Panc1 (cell line): ENCODE measurements at regions of chr17 and their contacts with region 1.

Region 1: DNA sequence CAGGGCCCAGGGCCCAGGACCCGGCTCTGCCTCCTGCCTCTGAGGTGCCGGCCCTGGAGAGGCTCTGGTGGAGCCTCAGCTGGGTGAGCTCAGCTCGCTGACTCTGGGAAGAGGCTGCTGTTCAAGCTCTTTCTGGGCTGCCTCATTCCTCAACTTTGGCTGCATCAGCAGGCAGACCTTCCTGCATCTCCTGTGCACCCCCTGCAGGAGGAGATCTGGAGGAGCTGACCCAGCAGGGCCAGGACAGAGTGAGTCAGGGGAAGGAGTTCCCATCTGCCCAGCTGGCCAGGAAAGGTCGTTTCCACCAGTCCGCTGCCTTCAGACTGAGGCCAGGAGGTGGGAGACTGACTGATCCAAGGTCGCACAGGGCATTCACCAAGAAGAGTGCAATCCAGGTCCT is 10.7 kb downstream of the CRHR1 start:
- DNase-seq: no peak
- ATAC-seq: peak; percentile 46; the same call in 1 of the 2 replicates
- H3K4me3 ChIP-seq: no peak overlapping the region
- H3K27ac ChIP-seq: no peak overlapping the region
- H3K4me1 ChIP-seq: no peaks in the 10 kb centered on the region
- H3K27me3 ChIP-seq: no peaks in the 10 kb centered on the region; the same call in 1 of the 2 replicates
- CTCF ChIP-seq: no peak

Region 2: DNA sequence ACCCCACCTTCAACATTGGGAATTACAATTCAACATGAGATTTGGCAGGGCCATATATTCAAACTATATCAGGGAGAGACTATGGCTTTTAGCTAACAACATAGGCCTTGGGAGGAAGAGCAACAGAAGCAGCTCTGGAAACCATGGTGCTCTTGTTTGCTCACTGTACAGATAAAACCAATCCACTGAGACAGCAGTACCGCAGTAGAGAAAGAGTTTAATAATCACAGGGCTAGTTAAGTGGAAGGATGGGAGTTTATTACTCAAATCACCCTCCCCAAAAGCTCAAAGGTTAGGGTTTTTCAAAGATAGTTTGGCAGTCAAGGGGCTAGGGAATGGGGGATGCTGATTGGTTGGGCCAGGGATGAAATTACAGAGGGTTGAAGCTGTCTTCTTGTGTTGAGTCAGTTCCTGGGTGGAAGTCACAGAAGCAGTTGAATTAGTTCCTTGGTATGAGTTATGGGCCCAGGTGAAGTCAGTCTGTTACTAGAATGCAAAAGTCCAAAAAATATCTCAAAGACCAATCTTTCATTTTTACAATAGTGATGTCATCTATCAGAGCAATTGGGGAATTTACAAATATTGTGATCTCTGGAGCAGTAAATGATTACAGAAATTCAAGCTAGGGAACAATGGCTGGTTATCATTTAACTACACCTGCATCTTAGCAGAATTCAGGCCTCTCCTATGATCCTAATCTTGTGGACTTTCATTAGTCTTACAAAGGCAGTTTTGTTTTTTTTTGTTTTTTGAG is 63.2 kb before region 1 on chr17:
- CTCF ChIA-PET with region 1: interaction called, 11 read pairs
- POLR2A ChIA-PET with region 1: no interaction called
- in situ Hi-C with region 1: no loop called
- intact Hi-C with region 1: no loop called
- DNase-seq: no peak
- ATAC-seq: no peak
- H3K4me3 ChIP-seq: no peak overlapping the region
- H3K27ac ChIP-seq: no peak overlapping the region
- H3K4me1 ChIP-seq: no peaks in the 10 kb centered on the region
- H3K27me3 ChIP-seq: no peaks in the 10 kb centered on the region; the same call in 1 of the 2 replicates
- CTCF ChIP-seq: no peak

Region 3: GRCh38 chr17:45782889-45783592 is 11.8 kb before region 1 on chr17:
- CTCF ChIA-PET with region 1: interaction called, 10 read pairs
- POLR2A ChIA-PET with region 1: no interaction called
- in situ Hi-C with region 1: no loop called
- intact Hi-C with region 1: no loop called
- DNase-seq: no peak
- ATAC-seq: peak; percentile 81
- H3K4me3 ChIP-seq: peak overlapping the region; percentile 39 to 43
- H3K27ac ChIP-seq: no peak overlapping the region
- H3K4me1 ChIP-seq: no peaks in the 10 kb centered on the region
- H3K27me3 ChIP-seq: no peaks in the 10 kb centered on the region; the same call in 1 of the 2 replicates
- CTCF ChIP-seq: peak; percentile 85